Mammary epithelial cell (primary cell): ENCODE measurements at regions of chr3 and their contacts with region 1.

Region 1: DNA sequence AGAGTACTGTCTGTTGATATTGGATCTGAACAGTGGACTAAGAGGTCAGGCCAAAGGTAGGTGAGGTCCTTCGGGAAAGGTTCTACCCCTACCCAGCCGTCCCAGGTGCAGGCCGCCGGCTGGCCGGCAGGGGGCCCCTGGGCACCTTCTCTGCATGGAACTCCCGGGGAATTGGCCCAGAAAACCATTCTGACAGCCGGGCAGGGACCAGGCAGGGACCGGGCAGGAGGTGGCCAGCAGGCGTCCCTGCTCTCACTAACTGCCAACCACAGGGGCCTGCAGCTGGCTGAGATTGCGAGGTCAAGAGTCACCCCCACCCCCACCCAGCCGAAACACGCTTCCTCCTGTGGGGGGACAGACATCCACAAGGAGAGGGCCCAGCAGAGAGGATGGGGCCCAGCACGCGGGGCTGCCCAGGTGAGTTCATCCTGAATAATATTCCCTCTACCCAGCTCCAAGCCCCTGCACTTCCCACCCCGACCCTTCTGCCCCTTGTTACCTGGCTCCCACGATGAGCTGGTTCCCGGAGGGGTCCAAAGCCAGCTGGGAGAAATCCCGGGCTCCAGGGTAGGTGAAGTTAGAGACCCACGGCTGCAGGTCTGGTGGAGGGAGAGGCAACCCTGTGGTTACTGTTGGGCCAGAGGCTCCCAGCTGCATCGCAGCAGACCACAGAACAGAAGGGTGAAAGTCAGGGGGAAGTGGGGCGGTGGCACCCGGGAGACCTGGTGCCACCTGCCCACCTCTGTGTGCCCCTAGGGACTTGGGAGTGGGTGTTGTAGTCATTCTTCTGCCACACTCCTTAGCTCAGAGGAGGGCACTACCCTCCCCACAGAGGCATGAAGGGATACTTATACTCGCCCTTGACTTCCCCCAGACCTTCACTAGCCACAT is 84.4 kb downstream of the SEMA5B start:
- DNase-seq: peak; percentile 52
- H3K4me3 ChIP-seq: no peak overlapping the region
- H3K27ac ChIP-seq: no peak overlapping the region
- H3K4me1 ChIP-seq: peaks cover 17% of the 10 kb centered on the region
- H3K27me3 ChIP-seq: no peaks in the 10 kb centered on the region
- CTCF ChIP-seq: peak; percentile 71 to 93

Region 2: DNA sequence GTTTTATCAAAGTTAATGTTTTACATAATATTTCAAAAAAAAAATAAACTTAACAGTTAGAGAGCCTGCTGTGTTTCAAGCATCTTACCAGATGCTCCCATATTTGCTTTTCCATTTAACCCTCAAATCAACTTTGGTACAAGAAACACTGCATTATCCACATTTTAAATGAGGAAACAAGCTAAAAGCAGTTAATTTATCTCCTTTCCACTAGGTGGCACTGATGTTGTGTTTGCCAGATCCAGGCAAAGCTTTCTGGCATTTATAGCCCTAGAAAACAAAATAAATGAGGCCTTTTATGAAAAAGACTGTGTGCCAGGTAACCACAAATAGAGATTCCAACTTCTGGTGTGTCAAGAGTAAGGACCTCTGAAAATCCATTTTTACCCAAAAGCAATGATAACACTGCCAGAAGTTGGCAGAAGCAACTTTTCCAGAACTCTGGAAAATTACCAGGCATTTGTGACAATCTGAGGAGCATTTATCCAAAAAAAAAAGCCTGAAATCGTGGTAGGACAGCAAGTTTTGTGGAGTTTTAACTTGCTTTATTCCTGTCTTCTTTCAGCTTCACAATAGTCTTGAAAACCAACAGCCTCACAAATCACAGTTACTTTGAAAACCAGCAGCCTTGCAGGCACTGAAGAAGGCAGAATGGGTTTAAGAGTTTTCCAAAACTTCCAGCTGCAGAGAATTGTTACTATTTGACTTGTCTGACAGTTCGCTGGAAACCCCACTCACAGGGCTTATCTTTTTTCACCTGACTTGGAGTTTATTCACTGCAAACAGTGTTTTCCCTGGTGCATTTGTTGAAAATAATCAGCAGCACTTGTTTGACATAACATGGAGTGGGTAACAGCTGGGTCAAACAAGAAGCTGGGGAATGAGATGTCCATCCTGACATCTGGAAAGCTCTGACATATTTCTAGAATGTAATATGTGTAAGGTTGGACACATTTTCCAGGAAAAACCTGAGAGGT is 550.0 kb before region 1 on chr3:
- CTCF ChIA-PET with region 1: no interaction called
- dilution Hi-C with region 1: no loop called
- in situ Hi-C with region 1: no loop called
- intact Hi-C with region 1: loop called (anchors 10 kb)
- DNase-seq: peak; percentile 32
- H3K4me3 ChIP-seq: no peak overlapping the region
- H3K27ac ChIP-seq: no peak overlapping the region
- H3K4me1 ChIP-seq: peaks cover 15% of the 10 kb centered on the region
- H3K27me3 ChIP-seq: no peaks in the 10 kb centered on the region
- CTCF ChIP-seq: peak; percentile 73 to 83

Region 3: DNA sequence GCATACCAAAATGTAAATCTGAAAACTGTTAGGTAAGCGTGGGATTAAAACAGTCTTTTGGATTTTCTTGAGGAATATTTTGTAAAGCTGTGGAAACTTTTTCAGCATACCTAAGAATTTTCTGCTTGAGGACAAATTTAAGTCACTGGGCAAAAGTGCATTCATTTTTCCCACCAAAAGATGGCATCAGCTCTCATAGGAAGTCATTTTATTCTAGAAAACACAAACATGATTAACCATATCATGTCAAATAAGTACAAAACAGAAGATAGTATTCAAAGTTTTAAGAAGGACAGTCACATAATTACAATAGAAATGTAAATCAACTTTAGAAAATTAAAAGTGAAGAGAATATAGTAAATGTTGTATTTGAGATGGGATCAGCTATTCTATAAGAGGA is 84.8 kb before region 1 on chr3:
- CTCF ChIA-PET with region 1: interaction called, 3 read pairs
- dilution Hi-C with region 1: no loop called
- in situ Hi-C with region 1: no loop called
- intact Hi-C with region 1: loop called (anchors 1 kb)
- DNase-seq: peak; percentile 32
- H3K4me3 ChIP-seq: no peak overlapping the region
- H3K27ac ChIP-seq: no peak overlapping the region
- H3K4me1 ChIP-seq: no peaks in the 10 kb centered on the region
- H3K27me3 ChIP-seq: no peaks in the 10 kb centered on the region
- CTCF ChIP-seq: peak; percentile 52 to 59

Region 4: DNA sequence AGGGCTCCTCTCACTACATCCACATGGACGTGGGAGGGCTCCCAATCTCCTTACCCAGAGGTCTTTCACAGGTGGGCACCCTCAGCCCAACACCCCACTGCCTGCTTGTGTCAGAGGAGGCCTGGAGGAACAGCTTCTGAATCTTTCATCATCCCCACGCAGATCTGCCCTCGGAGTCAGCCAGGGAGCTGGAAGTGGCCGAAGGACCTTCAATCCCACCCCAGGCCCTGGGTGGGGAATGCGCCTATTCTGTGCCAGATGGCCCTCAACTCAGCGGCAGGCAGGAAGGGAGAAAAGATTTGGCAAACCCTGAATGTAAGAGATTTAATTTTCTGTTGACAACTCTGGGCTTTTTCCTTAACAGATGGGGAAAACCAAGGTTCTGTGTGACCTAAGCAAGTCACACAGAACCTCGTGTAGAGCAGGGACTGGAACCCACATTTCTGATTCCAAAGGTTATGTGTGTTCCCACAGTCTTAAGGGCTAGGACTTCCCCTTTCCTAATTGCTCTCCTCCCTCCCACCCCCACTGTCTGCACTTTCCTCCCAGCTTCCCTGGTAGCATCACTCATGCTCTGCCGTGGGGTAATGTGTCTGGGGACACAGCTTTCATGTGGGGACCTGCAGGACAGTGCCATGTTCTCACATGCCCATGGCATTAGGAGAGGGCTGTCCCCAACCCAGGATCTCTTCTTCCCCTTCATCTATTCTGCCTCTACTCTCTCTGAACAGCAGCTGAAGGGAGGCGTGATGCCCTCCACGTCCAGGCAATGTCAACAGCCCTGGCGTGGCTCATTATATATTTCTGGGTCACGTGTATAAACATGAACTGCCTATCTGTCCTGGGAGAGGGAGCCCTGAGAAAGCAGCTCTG is 13.8 kb before region 1 on chr3:
- CTCF ChIA-PET with region 1: no interaction called
- dilution Hi-C with region 1: no loop called
- in situ Hi-C with region 1: no loop called
- intact Hi-C with region 1: loop called (anchors 1 kb)
- DNase-seq: peak; percentile 63
- H3K4me3 ChIP-seq: no peak overlapping the region
- H3K27ac ChIP-seq: no peak overlapping the region
- H3K4me1 ChIP-seq: peaks cover 48% of the 10 kb centered on the region
- H3K27me3 ChIP-seq: no peaks in the 10 kb centered on the region
- CTCF ChIP-seq: no peak

Region 5: GRCh38 chr3:123036352-123037014 is 93.3 kb after region 1 on chr3:
- CTCF ChIA-PET with region 1: no interaction called
- dilution Hi-C with region 1: no loop called
- in situ Hi-C with region 1: no loop called
- intact Hi-C with region 1: no loop called
- DNase-seq: peak; percentile 75
- H3K4me3 ChIP-seq: no peak overlapping the region
- H3K27ac ChIP-seq: no peak overlapping the region
- H3K4me1 ChIP-seq: peaks cover 5% of the 10 kb centered on the region
- H3K27me3 ChIP-seq: no peaks in the 10 kb centered on the region
- CTCF ChIP-seq: no peak

Region 6: DNA sequence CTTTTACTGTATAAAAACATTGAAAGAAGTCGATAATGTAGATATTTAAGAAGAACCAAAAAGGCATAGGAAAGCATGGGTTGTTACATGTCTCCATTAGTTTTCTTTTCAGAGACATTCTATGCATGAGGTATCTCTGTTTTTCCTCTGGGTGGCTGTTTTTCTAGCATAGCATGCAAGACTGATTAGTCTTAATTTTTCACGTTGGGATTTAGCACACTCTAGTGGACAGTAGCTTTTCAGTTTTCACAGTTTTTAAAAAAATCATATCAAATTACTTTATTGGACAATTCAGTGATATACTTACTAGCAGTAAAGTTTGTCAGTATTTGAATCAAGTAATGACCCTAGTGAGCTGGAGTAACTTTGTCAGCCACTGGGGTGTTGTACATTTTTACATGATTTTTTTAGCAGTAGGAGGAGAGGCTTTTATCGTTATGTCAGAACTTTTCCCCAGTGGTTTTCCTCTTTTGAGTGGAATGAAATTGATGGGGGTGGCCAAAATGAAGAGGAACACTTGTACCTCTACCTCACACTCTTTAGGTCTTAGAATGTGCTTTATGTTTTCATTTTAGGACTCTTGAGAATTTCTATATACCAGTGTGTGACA is 315.7 kb after region 1 on chr3:
- CTCF ChIA-PET with region 1: no interaction called
- dilution Hi-C with region 1: no loop called
- in situ Hi-C with region 1: loop called in 1 of 2 experiments (anchors 25 kb)
- intact Hi-C with region 1: loop called (anchors 1 kb)
- DNase-seq: peak; percentile 41
- H3K4me3 ChIP-seq: no peak overlapping the region
- H3K27ac ChIP-seq: no peak overlapping the region
- H3K4me1 ChIP-seq: peaks cover 4% of the 10 kb centered on the region
- H3K27me3 ChIP-seq: no peaks in the 10 kb centered on the region
- CTCF ChIP-seq: peak; percentile 39 to 61

Region 7: DNA sequence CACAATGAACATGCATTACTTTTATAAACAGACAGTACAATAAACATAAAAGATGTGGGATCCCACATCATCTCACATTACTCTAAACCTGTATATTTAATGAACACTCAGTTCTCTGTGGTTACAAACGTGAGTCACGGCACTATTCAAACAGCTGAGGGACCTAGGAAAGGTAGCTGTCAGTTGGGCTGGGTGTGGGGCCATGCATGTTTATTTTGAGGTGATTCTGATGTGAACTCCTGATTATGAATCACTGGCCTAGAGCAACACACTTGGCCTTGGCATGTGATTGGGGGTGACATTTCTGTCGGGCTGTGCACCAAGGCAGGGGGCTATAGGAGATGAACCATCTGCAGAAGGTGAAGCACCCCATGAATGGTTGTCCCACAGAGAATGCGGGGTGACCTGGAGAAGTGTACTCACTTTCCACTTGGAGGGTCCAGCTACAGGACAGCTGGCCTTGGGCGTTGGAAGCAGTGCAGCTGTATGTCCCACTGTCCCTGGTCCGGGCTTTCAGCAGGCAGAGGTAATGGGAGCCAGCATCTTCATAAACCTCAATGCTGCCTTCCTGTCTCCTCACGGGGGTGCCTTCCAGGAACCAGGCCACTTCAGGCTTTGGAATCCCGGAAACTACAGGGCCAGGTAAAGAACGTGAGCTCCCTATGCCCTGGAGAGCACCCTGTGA is 789.4 kb after region 1 on chr3:
- CTCF ChIA-PET with region 1: no interaction called
- dilution Hi-C with region 1: no loop called
- in situ Hi-C with region 1: no loop called
- intact Hi-C with region 1: no loop called
- DNase-seq: peak; percentile 97
- H3K4me3 ChIP-seq: no peak overlapping the region
- H3K27ac ChIP-seq: peak overlapping the region; percentile 82
- H3K4me1 ChIP-seq: peaks cover 38% of the 10 kb centered on the region
- H3K27me3 ChIP-seq: no peaks in the 10 kb centered on the region
- CTCF ChIP-seq: no peak